ENCODE measurements at regions of chr3 and their contacts with region 1.

Region 1: GRCh38 chr3:43378066-43378935 is 92.0 kb downstream of the SNRK start:
- DNase-seq: peak; percentile 73
- ATAC-seq: peak; percentile 61
- H3K4me3 ChIP-seq: no peak overlapping the region
- H3K4me3 Mint-ChIP-seq: no peak overlapping the region
- H3K27ac ChIP-seq: no peak overlapping the region
- H3K27ac Mint-ChIP-seq: no peak overlapping the region
- H3K4me1 ChIP-seq: no peaks in the 10 kb centered on the region
- H3K4me1 Mint-ChIP-seq: no peaks in the 10 kb centered on the region
- H3K27me3 ChIP-seq: no peaks in the 10 kb centered on the region
- H3K27me3 Mint-ChIP-seq: peaks cover 24% of the 10 kb centered on the region
- CTCF ChIP-seq: peak; percentile 87

Region 2: GRCh38 chr3:42961633-42962032 is 416.7 kb before region 1 on chr3:
- CTCF ChIA-PET with region 1: interaction called, 36 read pairs
- POLR2A ChIA-PET with region 1: no interaction called
- intact Hi-C with region 1: no loop called
- DNase-seq: peak; percentile 18
- ATAC-seq: no peak
- H3K4me3 ChIP-seq: no peak overlapping the region
- H3K4me3 Mint-ChIP-seq: no peak overlapping the region
- H3K27ac ChIP-seq: no peak overlapping the region
- H3K27ac Mint-ChIP-seq: no peak overlapping the region
- H3K4me1 ChIP-seq: no peaks in the 10 kb centered on the region
- H3K4me1 Mint-ChIP-seq: no peaks in the 10 kb centered on the region
- H3K27me3 ChIP-seq: no peaks in the 10 kb centered on the region
- H3K27me3 Mint-ChIP-seq: peaks cover 28% of the 10 kb centered on the region
- CTCF ChIP-seq: peak; percentile 39

Region 3: GRCh38 chr3:43223670-43224364 is 154.5 kb before region 1 on chr3:
- CTCF ChIA-PET with region 1: interaction called, 71 read pairs
- POLR2A ChIA-PET with region 1: no interaction called
- intact Hi-C with region 1: no loop called
- DNase-seq: peak; percentile 25
- ATAC-seq: no peak
- H3K4me3 ChIP-seq: no peak overlapping the region
- H3K4me3 Mint-ChIP-seq: no peak overlapping the region
- H3K27ac ChIP-seq: no peak overlapping the region
- H3K27ac Mint-ChIP-seq: no peak overlapping the region
- H3K4me1 ChIP-seq: no peaks in the 10 kb centered on the region
- H3K4me1 Mint-ChIP-seq: no peaks in the 10 kb centered on the region
- H3K27me3 ChIP-seq: peaks cover 0 to 2% (median 0%) of the 10 kb centered on the region in 4 experiments
- H3K27me3 Mint-ChIP-seq: peaks cover 23% of the 10 kb centered on the region
- CTCF ChIP-seq: peak; percentile 77